Posterior cingulate gyrus (tissue), 11 donors: ENCODE measurements at regions of chr2 and their contacts with region 1.

Region 1: DNA sequence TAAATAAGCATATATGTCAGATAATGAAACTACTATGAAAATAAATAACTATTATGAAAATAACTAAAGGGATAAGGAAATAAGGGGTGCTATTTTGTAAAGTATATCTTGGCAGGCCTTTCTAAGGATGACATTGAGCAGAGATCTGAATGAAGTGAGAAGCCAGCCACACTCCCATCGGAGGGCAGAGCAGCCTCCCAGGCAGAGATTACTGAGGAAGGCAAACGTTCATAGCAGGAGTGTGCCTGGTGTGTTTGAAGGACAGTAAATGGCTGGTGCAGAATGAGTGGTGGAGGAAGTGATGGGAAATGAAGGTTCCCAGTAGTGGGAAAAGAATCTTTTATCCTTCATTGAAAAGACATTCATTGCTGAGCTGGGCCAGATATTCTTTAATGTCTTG is 62.5 kb downstream of the SPHKAP start:
- DNase-seq: no peak

Region 2: DNA sequence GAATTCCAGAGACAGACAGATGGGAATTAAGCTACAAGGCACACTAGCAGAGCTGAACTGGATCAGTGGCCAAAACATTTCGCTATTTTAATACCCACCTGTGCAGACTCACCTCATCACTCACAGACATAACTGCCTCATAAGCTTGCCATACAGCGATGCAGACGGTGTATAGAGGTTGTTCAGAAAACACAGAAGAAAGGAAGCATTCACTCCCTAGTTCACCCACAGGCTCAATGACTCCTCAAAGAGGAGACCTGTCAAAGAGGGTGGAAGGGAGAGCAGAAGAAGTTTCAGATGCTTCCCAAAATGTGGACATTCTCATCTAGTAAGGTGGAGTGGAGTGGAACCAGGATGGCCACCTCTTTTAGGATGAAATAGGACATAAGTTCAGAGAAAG is 144.2 kb after region 1 on chr2:
- intact Hi-C with region 1: no loop called
- DNase-seq: no peak

Region 3: DNA sequence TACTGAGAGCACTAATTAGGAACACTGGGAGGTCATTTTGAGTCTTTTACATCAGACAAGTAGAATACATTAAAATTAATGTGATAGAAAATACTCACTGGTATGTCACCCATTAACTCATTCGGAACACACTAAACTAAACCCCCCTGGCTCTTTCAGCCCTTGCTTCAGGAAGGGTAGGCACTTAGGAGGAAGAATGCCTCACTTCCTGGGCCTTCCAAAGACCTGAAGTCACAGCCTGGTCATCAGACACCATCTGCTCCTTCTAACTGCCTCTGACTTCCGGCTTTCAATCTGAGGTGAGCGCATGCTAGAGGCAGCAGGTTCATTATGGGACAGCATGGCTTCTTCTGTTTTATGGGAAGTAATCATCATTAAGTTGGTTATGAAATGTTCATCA is 700.8 kb after region 1 on chr2:
- intact Hi-C with region 1: loop called (anchors 10 kb)
- DNase-seq: no peak